ENCODE measurements at regions of chr4 and their contacts with region 1.

Region 1: GRCh38 chr4:140851032-140851636 is 94.9 kb upstream of the TBC1D9 start:
- DNase-seq: peak; percentile 37
- ATAC-seq: no peak
- H3K4me3 Mint-ChIP-seq: no peak overlapping the region
- H3K27ac Mint-ChIP-seq: no peak overlapping the region
- H3K4me1 Mint-ChIP-seq: no peaks in the 10 kb centered on the region
- H3K27me3 Mint-ChIP-seq: peaks cover 18% of the 10 kb centered on the region

Region 2: DNA sequence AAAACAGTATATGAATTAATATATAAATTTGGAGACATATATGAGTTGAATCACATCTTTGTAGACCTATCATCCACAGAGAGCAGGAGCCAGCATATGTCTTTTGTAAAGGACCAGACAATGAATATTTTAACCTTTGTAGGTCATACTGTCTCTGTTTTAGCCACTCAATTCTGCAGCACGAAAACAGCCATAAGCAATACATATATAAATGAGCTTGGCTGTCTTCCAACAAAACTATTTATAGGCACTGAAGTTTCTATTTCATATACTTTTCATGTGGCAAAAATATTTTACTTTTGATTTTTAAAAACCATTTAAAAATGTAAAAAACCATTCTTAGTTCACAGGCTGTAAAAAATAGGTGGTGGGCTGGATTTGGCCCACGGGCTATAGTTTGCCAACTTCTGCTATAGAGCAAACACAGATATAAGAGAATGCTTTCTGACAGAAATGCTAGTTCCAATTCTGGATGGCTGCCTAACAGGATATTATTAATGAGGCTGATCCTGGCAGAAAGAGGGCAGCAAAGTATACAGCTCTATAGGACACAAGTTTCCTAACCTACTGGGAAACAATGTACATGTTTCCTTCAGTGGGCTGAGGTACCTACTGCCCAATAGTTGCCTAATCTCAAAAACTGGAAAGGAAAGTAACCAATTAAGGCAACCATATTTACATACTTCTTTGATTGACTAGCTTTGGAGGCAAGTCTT is 224.3 kb before region 1 on chr4:
- CTCF ChIA-PET with region 1: no interaction called
- POLR2A ChIA-PET with region 1: no interaction called
- intact Hi-C with region 1: loop called in 1 of 2 experiments (anchors 10 kb)
- DNase-seq: no peak
- ATAC-seq: no peak
- H3K4me3 Mint-ChIP-seq: no peak overlapping the region
- H3K27ac Mint-ChIP-seq: no peak overlapping the region
- H3K4me1 Mint-ChIP-seq: no peaks in the 10 kb centered on the region
- H3K27me3 Mint-ChIP-seq: no peaks in the 10 kb centered on the region

Region 3: DNA sequence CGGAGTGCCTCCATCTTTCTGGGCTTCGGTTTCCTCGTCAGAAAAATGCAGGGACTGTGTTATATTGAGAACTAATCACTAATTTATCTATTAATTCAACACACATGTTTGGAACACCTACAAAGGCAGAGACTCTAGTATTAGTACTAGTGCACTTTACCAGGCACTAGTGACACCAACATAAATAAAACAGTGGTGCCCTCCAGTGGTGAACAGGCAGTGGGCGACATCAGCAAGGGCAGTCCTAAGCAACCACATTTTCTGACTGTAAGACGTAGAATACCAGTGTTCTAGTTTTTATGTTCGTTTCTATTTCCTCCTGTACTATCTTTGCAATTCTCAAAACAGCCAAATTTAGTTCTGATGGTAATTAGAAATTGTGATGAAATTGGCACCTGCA is 213.3 kb before region 1 on chr4:
- CTCF ChIA-PET with region 1: interaction called, 3 read pairs
- POLR2A ChIA-PET with region 1: no interaction called
- intact Hi-C with region 1: loop called in 1 of 2 experiments (anchors 5 kb)
- DNase-seq: peak; percentile 64
- ATAC-seq: peak; percentile 76
- H3K4me3 Mint-ChIP-seq: no peak overlapping the region
- H3K27ac Mint-ChIP-seq: no peak overlapping the region
- H3K4me1 Mint-ChIP-seq: no peaks in the 10 kb centered on the region
- H3K27me3 Mint-ChIP-seq: peaks cover 4% of the 10 kb centered on the region

Region 4: DNA sequence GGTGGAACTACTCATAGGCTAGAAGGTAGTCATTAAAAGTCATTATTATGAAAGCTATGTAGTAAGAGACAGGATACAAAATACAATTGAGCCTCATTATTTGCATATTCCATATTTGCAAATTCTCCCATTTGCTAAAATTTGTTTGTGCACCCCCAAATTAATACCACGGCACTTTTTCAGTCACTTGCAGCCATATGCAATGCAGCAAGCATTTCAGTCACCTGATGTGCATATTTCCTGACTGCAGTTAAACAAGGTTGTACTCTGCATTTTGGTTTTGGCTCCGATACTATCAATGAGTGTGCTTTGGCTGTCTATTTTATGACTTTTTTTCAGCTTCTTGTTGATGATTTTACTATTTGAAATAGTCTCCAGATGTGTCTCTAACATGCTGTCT is 432.4 kb after region 1 on chr4:
- CTCF ChIA-PET with region 1: no interaction called
- POLR2A ChIA-PET with region 1: no interaction called
- intact Hi-C with region 1: no loop called
- DNase-seq: no peak
- ATAC-seq: no peak
- H3K4me3 Mint-ChIP-seq: no peak overlapping the region
- H3K27ac Mint-ChIP-seq: no peak overlapping the region
- H3K4me1 Mint-ChIP-seq: no peaks in the 10 kb centered on the region
- H3K27me3 Mint-ChIP-seq: peaks cover 3% of the 10 kb centered on the region

Measured in activated CD4-positive, alpha-beta T cell treated with anti-CD3 and anti-CD28 coated beads for 36 hours (primary cell).